Heart left ventricle (tissue), 16 donors: ENCODE measurements at regions of chr2 and their contacts with region 1.

Region 1: GRCh38 chr2:54341656-54342055 is 85.6 kb upstream of the TSPYL6 start:
- DNase-seq: no peak
- ATAC-seq: peak; percentile 47 to 75 (median 68)
- H3K4me3 ChIP-seq: no peak overlapping the region
- H3K27ac ChIP-seq: peak overlapping the region in 2 of 12 donors; percentile 20 to 26
- H3K4me1 ChIP-seq: peaks cover 0 to 34% (median 10%) of the 10 kb centered on the region in 12 donors
- H3K27me3 ChIP-seq: no peaks in the 10 kb centered on the region
- CTCF ChIP-seq: peak in 8 of 12 donors; percentile 21 to 63 (median 42)
- POLR2A ChIP-seq: no peak

Region 2: DNA sequence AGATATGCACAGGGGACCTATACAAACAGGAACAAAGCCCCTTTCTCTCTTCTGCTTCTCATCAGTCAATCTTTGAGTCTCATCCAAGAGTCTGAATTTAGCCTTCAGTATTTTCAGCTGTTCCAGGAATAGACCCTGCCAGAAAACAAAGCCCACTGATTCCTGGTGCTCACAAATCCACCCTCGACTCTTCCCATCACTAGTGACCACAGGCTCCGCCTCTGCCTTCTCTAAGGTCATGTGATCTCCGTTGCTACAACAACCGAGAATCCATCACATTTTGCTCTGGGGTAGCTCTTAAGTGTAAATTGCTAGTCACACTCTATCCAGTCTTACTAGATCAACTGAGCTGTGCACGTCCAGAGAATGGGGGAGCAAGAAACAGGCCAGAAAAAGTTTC is 68.1 kb after region 1 on chr2:
- intact Hi-C with region 1: loop called in 1 of 10 experiments (anchors 2 kb)
- DNase-seq: peak in 1 of 5 donors; percentile 39
- ATAC-seq: peak in 3 of 4 donors; percentile 36 to 68 (median 59)
- H3K4me3 ChIP-seq: no peak overlapping the region
- H3K27ac ChIP-seq: peak overlapping the region in 1 of 12 donors; percentile 25
- H3K4me1 ChIP-seq: peaks cover 0 to 37% (median 12%) of the 10 kb centered on the region in 12 donors
- H3K27me3 ChIP-seq: no peaks in the 10 kb centered on the region
- CTCF ChIP-seq: no peak
- POLR2A ChIP-seq: no peak